Left ventricle myocardium superior (tissue), 1 donor: ENCODE measurements at regions of chr22 and their contacts with region 1.

Region 1: GRCh38 chr22:33302049-33302545 is 243.9 kb upstream of the SYN3 start:
- DNase-seq: peak; percentile 92
- ATAC-seq: peak; percentile 85

Region 2: GRCh38 chr22:33529424-33530113 is 227.5 kb after region 1 on chr22:
- intact Hi-C with region 1: loop called (anchors 10 kb)
- DNase-seq: no peak
- ATAC-seq: peak; percentile 44

Region 3: GRCh38 chr22:33579448-33580093 is 277.5 kb after region 1 on chr22:
- intact Hi-C with region 1: loop called (anchors 5 kb)
- DNase-seq: peak; percentile 69
- ATAC-seq: peak; percentile 91